K562 (cell line): ENCODE measurements at regions of chr1 and their contacts with region 1.

Region 1: DNA sequence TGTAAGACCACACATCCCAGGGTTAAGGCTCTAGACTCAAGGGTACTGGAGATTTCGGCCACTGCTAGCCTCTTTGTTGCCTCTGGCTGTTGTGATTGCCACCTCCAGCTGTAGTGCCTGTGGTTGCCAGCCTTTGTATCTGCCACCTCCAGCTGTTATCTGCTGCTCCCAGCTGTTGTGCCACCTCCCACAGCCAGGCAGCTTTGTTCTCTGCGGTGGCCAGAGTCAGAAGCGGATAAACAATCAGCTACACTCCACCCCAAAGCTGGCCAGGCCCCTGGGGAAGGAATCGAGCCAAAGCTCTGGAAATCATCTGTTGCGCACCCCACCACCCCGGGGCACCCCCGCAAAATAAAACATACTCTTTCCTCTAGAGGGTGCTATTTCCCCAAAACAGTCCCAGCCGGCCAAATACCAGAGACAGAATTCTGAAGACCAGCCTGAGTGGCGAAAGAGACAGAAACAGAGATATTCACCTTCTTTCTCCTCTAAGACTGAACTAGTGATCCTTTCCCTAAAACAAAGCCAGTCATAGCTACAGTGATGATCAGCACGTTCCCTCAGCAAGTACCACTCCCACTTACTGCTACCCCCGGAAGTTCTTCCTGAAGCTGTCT is 14.8 kb upstream of the PIGM start:
- DNase-seq: peak; percentile 93 to 97 (median 96)
- ATAC-seq: peak; percentile 99
- H3K4me3 ChIP-seq: no peak overlapping the region
- H3K27ac ChIP-seq: no peak overlapping the region; the same call in 2 of the 3 replicates
- H3K4me1 ChIP-seq: peaks cover 11 to 20% of the 10 kb centered on the region in 2 experiments; a peak in 4 of 5 replicates
- H3K27me3 ChIP-seq: peaks cover 11 to 17% of the 10 kb centered on the region in 2 experiments
- CTCF ChIP-seq: peak; percentile 76 to 90 (median 81)
- EP300 ChIP-seq: peak; percentile 89
- POLR2A ChIP-seq: no peak
- RAD21 ChIP-seq: peak; percentile 72 to 74

Region 2: DNA sequence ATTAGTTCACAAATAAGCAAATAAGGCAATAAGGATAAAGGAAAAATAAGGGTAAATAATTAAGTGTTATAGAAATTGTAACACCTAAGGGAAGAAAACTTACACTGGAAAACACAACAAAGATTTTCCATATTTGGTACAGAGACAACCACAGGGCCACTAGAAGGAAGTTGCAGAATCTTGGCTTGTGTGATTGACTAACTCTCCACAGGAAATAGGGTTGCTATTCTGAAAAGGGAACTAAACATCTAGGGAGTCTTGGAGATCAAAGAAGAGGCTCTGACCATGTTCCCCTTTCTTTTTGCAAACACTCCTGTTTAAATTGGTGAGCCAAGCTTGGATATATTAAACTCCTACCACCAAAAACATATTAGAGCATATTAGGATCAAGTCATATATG is 399.9 kb before region 1 on chr1:
- CTCF ChIA-PET with region 1: no interaction called
- POLR2A ChIA-PET with region 1: no interaction called
- in situ Hi-C with region 1: no loop called
- intact Hi-C with region 1: no loop called
- DNase-seq: no peak
- ATAC-seq: no peak
- H3K4me3 ChIP-seq: no peak overlapping the region
- H3K27ac ChIP-seq: no peak overlapping the region
- H3K4me1 ChIP-seq: no peaks in the 10 kb centered on the region
- H3K27me3 ChIP-seq: no peaks in the 10 kb centered on the region
- CTCF ChIP-seq: no peak
- EP300 ChIP-seq: no peak
- POLR2A ChIP-seq: no peak
- RAD21 ChIP-seq: no peak

Region 3: DNA sequence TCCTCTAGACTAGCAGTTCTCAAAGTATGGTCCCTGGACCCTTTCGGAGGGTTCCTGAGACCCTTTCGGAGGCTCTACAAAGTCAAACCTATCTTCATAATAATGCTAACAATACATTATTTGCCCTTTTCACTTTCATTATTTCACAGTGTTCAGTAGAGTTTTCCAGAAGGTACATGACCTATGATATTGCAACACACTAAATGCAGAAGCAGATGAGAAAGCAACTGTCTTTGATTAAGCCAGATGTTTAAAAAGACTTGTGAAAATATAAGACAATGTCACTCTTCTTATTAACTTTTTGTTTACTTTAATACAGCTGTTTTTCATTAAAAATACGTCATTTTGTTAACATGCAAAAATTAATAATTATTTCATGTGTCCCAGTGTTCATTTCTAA is 17.6 kb after region 1 on chr1:
- CTCF ChIA-PET with region 1: no interaction called
- POLR2A ChIA-PET with region 1: interaction called, 12 read pairs
- in situ Hi-C with region 1: no loop called
- intact Hi-C with region 1: no loop called
- DNase-seq: no peak
- ATAC-seq: no peak
- H3K4me3 ChIP-seq: no peak overlapping the region
- H3K27ac ChIP-seq: no peak overlapping the region
- H3K4me1 ChIP-seq: no peaks in the 10 kb centered on the region; a peak in 1 of 5 replicates
- H3K27me3 ChIP-seq: peaks cover 18 to 55% of the 10 kb centered on the region in 2 experiments; a peak in 4 of 5 replicates
- CTCF ChIP-seq: no peak
- EP300 ChIP-seq: no peak
- POLR2A ChIP-seq: no peak
- RAD21 ChIP-seq: no peak

Region 4: DNA sequence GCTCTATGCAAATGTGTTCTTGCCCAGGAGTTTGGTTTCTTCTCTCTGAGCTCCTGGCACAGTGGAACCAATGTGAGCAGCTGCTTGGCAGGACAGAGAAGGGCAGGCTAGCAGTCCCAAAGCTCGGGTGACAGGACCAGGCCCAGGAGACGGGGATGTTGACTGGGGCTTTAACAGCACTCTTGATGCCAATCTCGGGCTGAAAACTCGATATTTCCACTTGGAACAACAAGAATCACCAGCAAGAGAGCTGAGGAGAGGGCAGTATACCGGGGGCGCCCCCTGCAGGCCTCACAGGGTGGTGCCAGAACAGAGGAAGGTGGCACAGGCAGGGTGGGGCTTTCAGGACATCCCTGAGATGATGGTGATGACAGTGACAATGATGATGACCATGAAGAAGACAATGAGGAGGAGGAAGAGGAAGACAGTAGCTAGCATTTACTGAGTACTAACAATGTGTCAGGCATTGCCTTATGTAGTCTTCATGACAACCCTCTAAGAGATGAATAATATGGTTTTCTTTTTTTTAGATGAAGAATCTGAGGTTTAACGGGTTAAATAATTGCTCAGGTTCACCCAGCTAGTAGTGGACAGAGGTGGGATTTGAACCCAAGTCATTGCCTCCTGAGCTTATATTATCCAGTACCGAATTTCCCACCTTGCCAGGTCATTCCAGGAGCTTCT is 32.1 kb after region 1 on chr1:
- CTCF ChIA-PET with region 1: interaction called, 7 read pairs
- POLR2A ChIA-PET with region 1: interaction called, 3 read pairs
- in situ Hi-C with region 1: no loop called
- intact Hi-C with region 1: loop called (anchors 1 kb)
- DNase-seq: peak; percentile 67 to 82 (median 78)
- ATAC-seq: peak; percentile 99
- H3K4me3 ChIP-seq: no peak overlapping the region
- H3K27ac ChIP-seq: no peak overlapping the region
- H3K4me1 ChIP-seq: peaks cover 0 to under 1% of the 10 kb centered on the region in 2 experiments; a peak in 1 of 5 replicates
- H3K27me3 ChIP-seq: peaks cover 13 to 43% of the 10 kb centered on the region in 2 experiments; a peak in 4 of 5 replicates
- CTCF ChIP-seq: peak; percentile 86 to 97 (median 88)
- EP300 ChIP-seq: no peak
- POLR2A ChIP-seq: no peak
- RAD21 ChIP-seq: peak; percentile 76 to 86

Region 5: DNA sequence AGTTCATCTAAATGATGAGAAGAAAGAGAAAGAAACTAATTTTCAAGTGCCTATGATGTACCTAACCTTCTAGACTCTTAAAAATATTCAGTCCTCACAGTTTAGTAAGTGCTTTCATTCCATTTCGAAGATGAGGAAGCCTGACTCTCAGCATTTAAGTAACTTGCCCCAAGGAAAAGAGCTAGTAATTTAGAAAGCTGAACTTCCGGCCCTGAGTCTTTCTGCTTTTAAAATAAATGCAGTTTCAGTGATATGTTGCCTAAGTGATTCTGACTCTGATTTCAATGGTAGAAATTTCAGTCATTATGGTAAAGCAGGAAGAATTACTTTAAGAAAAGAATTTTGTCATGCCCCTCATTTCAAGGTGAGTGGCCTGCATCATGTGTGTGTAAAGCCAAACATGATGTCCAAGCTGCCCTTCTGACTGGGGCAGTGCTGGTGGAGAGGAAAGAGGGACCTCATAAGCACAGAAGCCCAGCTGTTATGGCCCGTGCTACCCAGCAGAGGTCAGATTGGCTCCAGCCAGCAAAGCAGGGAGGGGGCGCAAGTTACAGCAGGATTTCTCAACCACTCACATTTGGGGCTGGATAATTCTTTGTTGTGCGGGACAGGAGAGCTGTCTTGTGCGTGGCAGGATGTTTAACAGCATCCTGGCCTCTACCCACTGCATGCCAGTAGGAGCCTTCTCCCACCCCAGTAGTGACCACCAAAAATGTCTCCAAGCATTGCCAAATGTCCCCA is 115.5 kb after region 1 on chr1:
- CTCF ChIA-PET with region 1: no interaction called
- POLR2A ChIA-PET with region 1: no interaction called
- in situ Hi-C with region 1: no loop called
- intact Hi-C with region 1: loop called (anchors 5 kb)
- DNase-seq: peak in 3 of 4 experiments; percentile 24 to 45 (median 33)
- ATAC-seq: peak; percentile 92
- H3K4me3 ChIP-seq: no peak overlapping the region
- H3K27ac ChIP-seq: no peak overlapping the region
- H3K4me1 ChIP-seq: peaks cover 0 to 9% of the 10 kb centered on the region in 2 experiments; a peak in 3 of 5 replicates
- H3K27me3 ChIP-seq: peaks cover 9 to 34% of the 10 kb centered on the region in 2 experiments; a peak in 4 of 5 replicates
- CTCF ChIP-seq: peak; percentile 55 to 89 (median 68)
- EP300 ChIP-seq: no peak
- POLR2A ChIP-seq: no peak
- RAD21 ChIP-seq: peak; percentile 14 to 62; a peak in 2 of 4 replicates